Activated naive CD4-positive, alpha-beta T cell treated with anti-CD3 and anti-CD28 coated beads for 36 hours (primary cell): ENCODE measurements at regions of chr1 and their contacts with region 1.

Region 1: GRCh38 chr1:27102707-27103491 is 52.0 kb downstream of the SLC9A1 start:
- DNase-seq: peak; percentile 89
- H3K4me3 Mint-ChIP-seq: no peak overlapping the region
- H3K27ac Mint-ChIP-seq: no peak overlapping the region
- H3K4me1 Mint-ChIP-seq: peaks cover 12% of the 10 kb centered on the region
- H3K27me3 Mint-ChIP-seq: no peaks in the 10 kb centered on the region

Region 2: DNA sequence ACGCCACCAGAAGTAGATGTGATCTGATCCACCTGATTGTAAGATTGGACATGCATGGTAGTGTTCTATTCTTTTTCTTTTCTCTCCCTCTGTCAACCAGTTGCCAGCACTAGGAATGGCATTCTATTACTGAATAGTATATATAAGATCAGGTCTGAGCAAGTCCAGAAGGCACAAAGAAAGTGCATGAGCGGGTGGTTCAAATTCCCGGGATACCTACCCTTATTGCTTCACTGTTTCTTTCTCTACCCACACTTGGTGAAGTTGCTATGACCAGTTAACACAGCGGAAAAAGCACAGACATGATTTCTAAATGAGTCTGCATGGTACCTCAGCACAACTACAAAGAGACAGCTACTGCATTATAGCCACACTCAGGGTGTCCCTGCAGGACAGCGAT is 12.0 kb before region 1 on chr1:
- CTCF ChIA-PET with region 1: interaction called, 11 read pairs
- intact Hi-C with region 1: no loop called
- DNase-seq: no peak
- H3K4me3 Mint-ChIP-seq: no peak overlapping the region
- H3K27ac Mint-ChIP-seq: no peak overlapping the region
- H3K4me1 Mint-ChIP-seq: no peaks in the 10 kb centered on the region
- H3K27me3 Mint-ChIP-seq: no peaks in the 10 kb centered on the region

Region 3: GRCh38 chr1:27192039-27192529 is 89.2 kb after region 1 on chr1:
- CTCF ChIA-PET with region 1: interaction called, 11 read pairs
- intact Hi-C with region 1: no loop called
- DNase-seq: no peak
- H3K4me3 Mint-ChIP-seq: no peak overlapping the region
- H3K27ac Mint-ChIP-seq: no peak overlapping the region
- H3K4me1 Mint-ChIP-seq: no peaks in the 10 kb centered on the region
- H3K27me3 Mint-ChIP-seq: no peaks in the 10 kb centered on the region

Region 4: GRCh38 chr1:27704958-27705357 is 602.1 kb after region 1 on chr1:
- CTCF ChIA-PET with region 1: no interaction called
- intact Hi-C with region 1: no loop called
- DNase-seq: no peak
- H3K4me3 Mint-ChIP-seq: no peak overlapping the region
- H3K27ac Mint-ChIP-seq: no peak overlapping the region
- H3K4me1 Mint-ChIP-seq: no peaks in the 10 kb centered on the region
- H3K27me3 Mint-ChIP-seq: no peaks in the 10 kb centered on the region